Vagina (tissue), 2 donors: ENCODE measurements at regions of chr20 and their contacts with region 1.

Region 1: DNA sequence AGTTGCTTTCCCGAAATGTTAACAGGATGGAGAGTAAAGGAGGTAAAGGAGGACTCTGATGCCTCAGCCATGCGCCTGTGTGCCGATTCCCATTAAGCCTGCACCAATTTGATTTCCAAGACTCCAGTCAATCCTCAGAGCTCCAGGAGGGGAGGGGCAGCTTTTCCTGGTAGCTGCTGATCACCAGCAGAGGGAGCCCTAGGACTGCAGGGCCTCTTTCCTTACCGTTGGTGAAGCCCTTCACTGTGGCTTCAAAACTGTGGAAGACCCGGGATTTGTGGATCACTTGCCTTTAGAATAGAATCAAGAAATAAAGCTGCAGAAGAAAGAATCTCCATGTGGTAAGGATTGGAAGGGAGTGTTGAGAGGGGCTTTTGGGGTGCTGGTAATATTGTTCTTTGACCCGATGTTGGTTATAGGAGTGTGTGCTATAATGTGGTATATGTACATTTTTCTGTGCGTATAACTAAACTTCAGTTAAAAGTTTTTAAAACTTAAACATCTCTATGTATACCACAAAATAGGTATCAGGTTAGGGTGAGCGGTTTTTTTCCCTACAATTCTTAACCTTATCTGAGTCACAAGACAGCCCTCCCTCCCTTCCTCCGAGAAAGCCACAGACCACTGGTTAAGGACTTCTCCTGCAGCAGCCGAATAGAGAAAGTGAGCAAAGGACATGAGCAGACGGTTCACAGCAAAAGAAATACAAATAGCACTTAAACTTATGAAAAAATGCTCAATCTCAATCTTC is 6.9 kb upstream of the OSER1 start:
- DNase-seq: no peak
- H3K4me3 ChIP-seq: no peak overlapping the region
- H3K27ac ChIP-seq: no peak overlapping the region
- H3K4me1 ChIP-seq: peaks cover 13% of the 10 kb centered on the region
- H3K27me3 ChIP-seq: no peaks in the 10 kb centered on the region
- CTCF ChIP-seq: peak; percentile 28 to 50 (median 41)
- POLR2A ChIP-seq: no peak

Region 2: GRCh38 chr20:44319756-44320422 is 102.4 kb after region 1 on chr20:
- intact Hi-C with region 1: loop called (anchors 5 kb)
- DNase-seq: no peak
- H3K4me3 ChIP-seq: no peak overlapping the region
- H3K27ac ChIP-seq: no peak overlapping the region
- H3K4me1 ChIP-seq: no peaks in the 10 kb centered on the region
- H3K27me3 ChIP-seq: no peaks in the 10 kb centered on the region
- CTCF ChIP-seq: no peak
- POLR2A ChIP-seq: no peak